Posterior vena cava (tissue), 2 donors: ENCODE measurements at regions of chr11 and their contacts with region 1.

Region 1: DNA sequence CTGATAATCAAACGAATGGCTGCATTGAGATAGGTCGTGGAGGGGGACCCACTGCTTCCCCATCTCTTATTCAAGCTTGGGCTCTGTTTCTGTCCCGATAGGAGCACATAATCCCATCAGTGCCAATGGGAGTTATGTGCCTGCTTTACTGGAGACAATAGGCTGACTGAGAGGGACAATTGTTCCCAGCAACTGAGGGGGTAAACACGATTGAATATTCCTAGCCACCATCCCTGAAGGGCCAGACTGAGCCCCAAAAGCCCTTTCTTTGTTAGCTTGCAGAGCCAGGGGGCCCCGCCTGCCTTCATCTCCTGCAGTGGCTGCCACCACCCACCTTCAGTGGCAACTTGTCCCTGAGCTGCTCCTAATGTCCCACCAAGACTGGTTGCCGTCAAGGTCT is 172.8 kb upstream of the NAV2 start:
- DNase-seq: no peak

Region 2: GRCh38 chr11:19290356-19290755 is 249.5 kb before region 1 on chr11:
- intact Hi-C with region 1: loop called in 1 of 2 experiments (anchors 1 kb)
- DNase-seq: no peak